ENCODE measurements at regions of chr2 and their contacts with region 1.

Region 1: GRCh38 chr2:38720613-38721241 is 30.4 kb downstream of the SRSF7 start:
- DNase-seq: peak in 3 of 5 donors; percentile 28 to 91 (median 72)
- H3K4me3 ChIP-seq: peak overlapping the region in 1 of 3 donors; percentile 21
- H3K27ac ChIP-seq: peak overlapping the region; percentile 20 to 72
- H3K4me1 ChIP-seq: peaks cover 0 to 11% (median 9%) of the 10 kb centered on the region in 3 donors
- H3K27me3 ChIP-seq: no peaks in the 10 kb centered on the region
- CTCF ChIP-seq: no peak

Region 2: DNA sequence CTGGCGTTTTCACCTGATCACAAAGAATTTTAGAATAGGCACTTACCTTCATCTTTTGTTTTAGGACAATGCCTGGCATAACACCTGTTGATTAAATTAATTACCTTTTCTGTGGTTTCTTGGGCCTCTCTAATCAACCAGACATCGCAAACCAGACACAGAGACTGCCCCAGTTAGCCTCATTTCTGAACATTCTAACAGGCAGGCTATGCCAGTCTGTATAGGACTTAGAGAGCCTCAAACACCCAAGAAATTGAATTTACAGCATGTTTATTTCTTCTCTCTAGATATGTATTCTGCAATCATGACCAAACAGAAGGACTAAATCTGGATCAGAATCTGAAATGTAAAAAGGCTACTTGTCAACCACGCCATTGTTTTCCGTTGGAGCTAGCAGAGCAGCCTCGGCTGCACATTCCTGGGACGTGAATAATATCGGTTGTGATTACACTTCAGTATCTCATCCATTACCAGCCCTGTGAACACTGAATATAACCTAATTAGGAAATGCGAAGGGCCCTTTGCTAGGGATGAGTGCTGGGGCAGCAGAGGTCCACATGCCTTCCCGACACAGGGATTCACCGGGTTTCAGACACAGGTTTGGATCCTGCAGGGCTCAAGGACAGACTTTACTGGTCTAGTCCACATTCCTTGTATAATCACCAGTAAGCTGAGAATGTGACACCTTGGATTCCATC is 1031.8 kb before region 1 on chr2:
- intact Hi-C with region 1: no loop called
- DNase-seq: peak in 1 of 5 donors; percentile 32
- H3K4me3 ChIP-seq: no peak overlapping the region
- H3K27ac ChIP-seq: no peak overlapping the region
- H3K4me1 ChIP-seq: no peaks in the 10 kb centered on the region
- H3K27me3 ChIP-seq: no peaks in the 10 kb centered on the region
- CTCF ChIP-seq: no peak

Region 3: GRCh38 chr2:38581193-38582147 is 139.3 kb before region 1 on chr2:
- intact Hi-C with region 1: loop called (anchors 10 kb)
- DNase-seq: peak in 3 of 5 donors; percentile 34 to 90 (median 90)
- H3K4me3 ChIP-seq: no peak overlapping the region
- H3K27ac ChIP-seq: no peak overlapping the region
- H3K4me1 ChIP-seq: no peaks in the 10 kb centered on the region
- H3K27me3 ChIP-seq: no peaks in the 10 kb centered on the region
- CTCF ChIP-seq: peak; percentile 69

Region 4: DNA sequence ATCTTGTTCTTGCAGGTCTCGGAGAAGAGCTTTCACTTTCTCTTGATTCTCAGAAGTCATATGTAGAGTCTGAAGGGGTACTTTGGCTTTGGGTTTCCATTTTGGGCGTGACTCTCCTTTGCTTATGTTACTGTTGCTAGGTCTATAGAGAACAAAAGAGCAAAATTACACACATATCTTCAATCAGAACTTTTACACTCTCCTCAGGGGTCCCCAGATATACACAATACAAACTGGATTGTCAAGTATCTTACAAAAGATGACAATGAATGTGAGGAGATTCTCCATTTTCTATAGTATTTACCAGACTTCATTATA is 142.6 kb after region 1 on chr2:
- intact Hi-C with region 1: no loop called
- DNase-seq: no peak
- H3K4me3 ChIP-seq: peak overlapping the region in 2 of 3 donors; percentile 0 to 15
- H3K27ac ChIP-seq: no peak overlapping the region
- H3K4me1 ChIP-seq: no peaks in the 10 kb centered on the region
- H3K27me3 ChIP-seq: no peaks in the 10 kb centered on the region
- CTCF ChIP-seq: no peak

Measured in kidney (tissue), 22 donors.